ENCODE measurements at regions of chr7 and their contacts with region 1.

Region 1: DNA sequence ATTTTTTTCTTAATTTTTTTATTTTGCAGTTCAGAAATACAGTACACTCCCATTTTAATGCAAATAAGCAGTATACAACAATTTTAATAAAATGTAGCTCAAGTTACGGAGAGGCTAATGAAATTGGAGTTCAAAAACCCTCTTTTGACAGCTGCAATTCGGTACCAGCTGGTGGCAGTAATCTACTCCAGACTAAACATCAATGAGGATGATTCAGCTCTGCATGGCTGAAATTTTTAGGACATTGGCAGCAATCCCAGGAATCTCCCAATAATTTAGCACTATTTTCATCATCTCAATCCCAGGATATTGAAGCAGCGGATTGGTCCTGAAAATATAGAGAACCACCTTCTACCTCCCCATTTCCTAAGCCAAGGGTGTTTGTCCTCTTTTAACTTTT is 278.8 kb downstream of the CACNA2D1 start:
- DNase-seq: peak in 4 of 5 donors; percentile 15 to 35 (median 26)
- ATAC-seq: peak; percentile 45 to 86 (median 68)
- H3K4me3 ChIP-seq: no peak overlapping the region
- H3K27ac ChIP-seq: no peak overlapping the region
- H3K4me1 ChIP-seq: peaks cover 0 to 16% (median 7%) of the 10 kb centered on the region in 12 donors
- H3K27me3 ChIP-seq: no peaks in the 10 kb centered on the region
- CTCF ChIP-seq: peak in 10 of 12 donors; percentile 3 to 55 (median 34)
- POLR2A ChIP-seq: no peak

Region 2: GRCh38 chr7:82204694-82205093 is 39.9 kb after region 1 on chr7:
- intact Hi-C with region 1: loop called in 1 of 10 experiments (anchors 5 kb)
- DNase-seq: peak in 4 of 5 donors; percentile 73 to 88 (median 81)
- ATAC-seq: peak; percentile 91 to 99 (median 95)
- H3K4me3 ChIP-seq: no peak overlapping the region
- H3K27ac ChIP-seq: peak overlapping the region in 10 of 12 donors; percentile 16 to 73 (median 49)
- H3K4me1 ChIP-seq: peaks cover 0 to 12% (median 1%) of the 10 kb centered on the region in 12 donors
- H3K27me3 ChIP-seq: no peaks in the 10 kb centered on the region
- CTCF ChIP-seq: no peak
- POLR2A ChIP-seq: no peak